Naive thymus-derived CD4-positive, alpha-beta T cell (primary cell): ENCODE measurements at regions of chr4 and their contacts with region 1.

Region 1: GRCh38 chr4:39754309-39754708 is 56.4 kb downstream of the UBE2K start:
- DNase-seq: no peak
- ATAC-seq: no peak
- H3K4me3 ChIP-seq: no peak overlapping the region
- H3K4me3 Mint-ChIP-seq: no peak overlapping the region
- H3K27ac ChIP-seq: no peak overlapping the region
- H3K27ac Mint-ChIP-seq: peak overlapping the region in 3 of 9 donors; percentile 4 to 41 (median 28)
- H3K4me1 ChIP-seq: no peaks in the 10 kb centered on the region
- H3K4me1 Mint-ChIP-seq: peaks cover 6 to 19% (median 9%) of the 10 kb centered on the region in 7 donors
- H3K27me3 ChIP-seq: no peaks in the 10 kb centered on the region
- H3K27me3 Mint-ChIP-seq: no peaks in the 10 kb centered on the region

Region 2: GRCh38 chr4:39741401-39741800 is 12.9 kb before region 1 on chr4:
- CTCF ChIA-PET with region 1: no interaction called
- POLR2A ChIA-PET with region 1: no interaction called
- intact Hi-C with region 1: loop called in 1 of 2 experiments (anchors 2 kb)
- DNase-seq: no peak
- ATAC-seq: no peak
- H3K4me3 ChIP-seq: no peak overlapping the region
- H3K4me3 Mint-ChIP-seq: no peak overlapping the region
- H3K27ac ChIP-seq: no peak overlapping the region
- H3K27ac Mint-ChIP-seq: no peak overlapping the region
- H3K4me1 ChIP-seq: no peaks in the 10 kb centered on the region
- H3K4me1 Mint-ChIP-seq: peaks cover 3 to 15% (median 5%) of the 10 kb centered on the region in 7 donors
- H3K27me3 ChIP-seq: no peaks in the 10 kb centered on the region
- H3K27me3 Mint-ChIP-seq: no peaks in the 10 kb centered on the region

Region 3: GRCh38 chr4:39792529-39792928 is 38.2 kb after region 1 on chr4:
- CTCF ChIA-PET with region 1: no interaction called
- POLR2A ChIA-PET with region 1: no interaction called
- intact Hi-C with region 1: no loop called
- DNase-seq: no peak
- ATAC-seq: no peak
- H3K4me3 ChIP-seq: no peak overlapping the region
- H3K4me3 Mint-ChIP-seq: no peak overlapping the region
- H3K27ac ChIP-seq: no peak overlapping the region
- H3K27ac Mint-ChIP-seq: no peak overlapping the region
- H3K4me1 ChIP-seq: no peaks in the 10 kb centered on the region
- H3K4me1 Mint-ChIP-seq: no peaks in the 10 kb centered on the region
- H3K27me3 ChIP-seq: no peaks in the 10 kb centered on the region
- H3K27me3 Mint-ChIP-seq: no peaks in the 10 kb centered on the region

Region 4: GRCh38 chr4:39922389-39922788 is 168.1 kb after region 1 on chr4:
- CTCF ChIA-PET with region 1: no interaction called
- POLR2A ChIA-PET with region 1: no interaction called
- intact Hi-C with region 1: no loop called
- DNase-seq: no peak
- ATAC-seq: no peak
- H3K4me3 ChIP-seq: no peak overlapping the region
- H3K4me3 Mint-ChIP-seq: no peak overlapping the region
- H3K27ac ChIP-seq: no peak overlapping the region
- H3K27ac Mint-ChIP-seq: no peak overlapping the region
- H3K4me1 ChIP-seq: no peaks in the 10 kb centered on the region
- H3K4me1 Mint-ChIP-seq: peaks cover 0 to 19% (median 13%) of the 10 kb centered on the region in 7 donors
- H3K27me3 ChIP-seq: no peaks in the 10 kb centered on the region
- H3K27me3 Mint-ChIP-seq: no peaks in the 10 kb centered on the region